MCF 10A (cell line): ENCODE measurements at regions of chr1 and their contacts with region 1.

Region 1: GRCh38 chr1:238223076-238223640 is 332.4 kb upstream of the ZP4 start:
- DNase-seq: peak; percentile 75
- H3K4me3 Mint-ChIP-seq: no peak overlapping the region
- H3K27ac Mint-ChIP-seq: no peak overlapping the region
- H3K4me1 Mint-ChIP-seq: peaks cover 5% of the 10 kb centered on the region
- H3K27me3 Mint-ChIP-seq: no peaks in the 10 kb centered on the region
- CTCF ChIP-seq: no peak

Region 2: DNA sequence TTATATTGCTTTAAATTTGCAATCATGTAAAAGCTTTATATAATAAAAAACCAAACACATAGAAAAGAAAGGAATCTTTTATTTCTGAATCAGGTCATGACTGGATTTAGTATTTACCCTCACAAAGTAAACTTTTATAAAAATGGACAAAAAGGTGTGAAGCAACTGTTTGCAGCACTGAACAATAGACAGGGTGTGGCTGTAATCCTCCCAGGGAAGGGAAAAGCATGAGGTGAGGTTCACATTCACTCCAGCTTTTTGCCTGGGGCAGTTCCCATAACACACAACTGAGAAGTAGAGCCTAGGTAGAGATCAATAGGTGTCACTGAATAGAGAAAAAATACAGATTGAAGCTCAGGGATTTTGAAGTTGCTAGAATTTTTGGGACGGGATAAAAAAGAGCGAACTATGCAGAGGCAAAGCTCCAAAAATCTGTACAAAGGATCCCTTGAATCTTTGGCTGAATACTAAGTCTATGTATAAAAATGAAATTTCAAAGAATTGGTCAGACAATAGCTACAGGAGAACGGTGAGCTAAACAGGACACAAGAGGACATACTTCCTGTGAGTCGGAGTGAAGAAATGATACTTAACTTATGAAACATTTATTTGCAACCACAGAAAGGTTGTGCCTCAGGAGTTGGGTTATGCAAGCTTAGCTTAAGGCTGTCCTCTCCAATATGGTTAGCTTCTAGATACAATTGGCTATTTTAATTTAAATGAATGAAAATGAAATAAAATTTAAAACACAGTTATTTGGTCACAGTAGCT is 170.5 kb before region 1 on chr1:
- CTCF ChIA-PET with region 1: no interaction called
- POLR2A ChIA-PET with region 1: no interaction called
- intact Hi-C with region 1: loop called (anchors 5 kb)
- DNase-seq: peak; percentile 92
- H3K4me3 Mint-ChIP-seq: no peak overlapping the region
- H3K27ac Mint-ChIP-seq: peak overlapping the region; percentile 67
- H3K4me1 Mint-ChIP-seq: no peaks in the 10 kb centered on the region
- H3K27me3 Mint-ChIP-seq: no peaks in the 10 kb centered on the region
- CTCF ChIP-seq: no peak

Region 3: GRCh38 chr1:238242181-238242580 is 19.0 kb after region 1 on chr1:
- CTCF ChIA-PET with region 1: interaction called, 29 read pairs
- POLR2A ChIA-PET with region 1: no interaction called
- intact Hi-C with region 1: no loop called
- DNase-seq: peak; percentile 40
- H3K4me3 Mint-ChIP-seq: no peak overlapping the region
- H3K27ac Mint-ChIP-seq: no peak overlapping the region
- H3K4me1 Mint-ChIP-seq: peaks cover 6% of the 10 kb centered on the region
- H3K27me3 Mint-ChIP-seq: no peaks in the 10 kb centered on the region
- CTCF ChIP-seq: no peak

Region 4: GRCh38 chr1:238409932-238410331 is 186.8 kb after region 1 on chr1:
- CTCF ChIA-PET with region 1: no interaction called
- POLR2A ChIA-PET with region 1: no interaction called
- intact Hi-C with region 1: no loop called
- DNase-seq: peak; percentile 21
- H3K4me3 Mint-ChIP-seq: no peak overlapping the region
- H3K27ac Mint-ChIP-seq: peak overlapping the region; percentile 0
- H3K4me1 Mint-ChIP-seq: peaks cover 7% of the 10 kb centered on the region
- H3K27me3 Mint-ChIP-seq: no peaks in the 10 kb centered on the region
- CTCF ChIP-seq: no peak